Caco-2 (cell line): ENCODE measurements at regions of chr22 and their contacts with region 1.

Region 1: GRCh38 chr22:37538590-37539357 is 19.6 kb upstream of the CARD10 start:
- DNase-seq: peak; percentile 92 to 94
- H3K4me3 ChIP-seq: no peak overlapping the region
- H3K4me3 Mint-ChIP-seq: peak overlapping the region; percentile 50
- H3K27ac Mint-ChIP-seq: peak overlapping the region; percentile 66
- H3K4me1 ChIP-seq: peaks cover 12% of the 10 kb centered on the region
- H3K4me1 Mint-ChIP-seq: peaks cover 18% of the 10 kb centered on the region
- H3K27me3 ChIP-seq: no peaks in the 10 kb centered on the region
- H3K27me3 Mint-ChIP-seq: no peaks in the 10 kb centered on the region
- CTCF ChIP-seq: peak; percentile 93 to 96

Region 2: GRCh38 chr22:37457093-37457893 is 81.5 kb before region 1 on chr22:
- CTCF ChIA-PET with region 1: no interaction called
- POLR2A ChIA-PET with region 1: no interaction called
- intact Hi-C with region 1: no loop called
- DNase-seq: peak; percentile 84 to 92
- H3K4me3 ChIP-seq: no peak overlapping the region
- H3K4me3 Mint-ChIP-seq: no peak overlapping the region
- H3K27ac Mint-ChIP-seq: peak overlapping the region; percentile 94
- H3K4me1 ChIP-seq: peaks cover 35% of the 10 kb centered on the region
- H3K4me1 Mint-ChIP-seq: peaks cover 40% of the 10 kb centered on the region
- H3K27me3 ChIP-seq: no peaks in the 10 kb centered on the region
- H3K27me3 Mint-ChIP-seq: no peaks in the 10 kb centered on the region
- CTCF ChIP-seq: peak; percentile 92 to 98

Region 3: GRCh38 chr22:37566903-37567820 is 28.4 kb after region 1 on chr22:
- CTCF ChIA-PET with region 1: interaction called, 48 read pairs
- POLR2A ChIA-PET with region 1: interaction called, 7 read pairs
- intact Hi-C with region 1: loop called (anchors 1 kb)
- DNase-seq: peak; percentile 79 to 90
- H3K4me3 ChIP-seq: no peak overlapping the region
- H3K4me3 Mint-ChIP-seq: peak overlapping the region; percentile 16
- H3K27ac Mint-ChIP-seq: peak overlapping the region; percentile 48
- H3K4me1 ChIP-seq: peaks cover 80% of the 10 kb centered on the region
- H3K4me1 Mint-ChIP-seq: peaks cover 33% of the 10 kb centered on the region
- H3K27me3 ChIP-seq: no peaks in the 10 kb centered on the region
- H3K27me3 Mint-ChIP-seq: no peaks in the 10 kb centered on the region
- CTCF ChIP-seq: peak; percentile 90 to 93

Region 4: DNA sequence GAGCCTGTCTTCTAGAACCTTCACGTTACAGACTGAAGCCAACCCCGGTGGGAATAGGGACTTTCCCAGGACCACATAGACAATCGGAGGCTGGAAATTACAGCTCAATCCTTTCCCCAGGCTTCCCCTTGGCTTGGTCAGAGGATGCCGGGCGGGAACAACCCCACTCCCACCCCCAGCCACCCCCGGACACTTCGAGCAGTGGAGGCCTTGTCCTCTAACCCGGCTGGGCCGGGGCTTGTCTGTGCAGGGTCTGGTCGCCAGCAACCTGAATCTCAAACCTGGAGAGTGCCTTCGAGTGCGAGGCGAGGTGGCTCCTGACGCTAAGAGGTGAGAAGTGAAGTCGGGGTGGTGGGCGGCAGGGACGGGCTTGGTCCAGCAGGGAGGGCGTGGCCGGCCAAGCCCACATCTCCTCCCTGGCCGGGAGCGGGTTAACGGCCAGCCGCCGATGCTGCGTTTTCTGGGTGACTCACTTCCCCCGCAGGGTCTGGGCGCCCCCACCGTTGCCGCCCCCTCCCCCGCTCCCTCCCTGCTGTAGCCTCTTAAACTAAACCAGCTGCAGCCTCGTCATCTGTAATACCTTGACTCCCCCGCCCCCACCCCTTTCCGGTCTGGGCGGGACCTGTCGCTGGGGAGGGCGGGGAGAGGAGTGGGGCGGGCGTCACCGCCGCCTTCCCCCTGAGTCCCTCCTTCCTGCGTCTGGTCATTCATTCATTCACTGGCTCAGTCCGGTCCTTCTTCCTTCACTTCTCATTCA is 138.1 kb after region 1 on chr22:
- CTCF ChIA-PET with region 1: no interaction called
- POLR2A ChIA-PET with region 1: no interaction called
- intact Hi-C with region 1: loop called (anchors 5 kb)
- DNase-seq: peak; percentile 84 to 88
- H3K4me3 ChIP-seq: peak overlapping the region; percentile 53
- H3K4me3 Mint-ChIP-seq: peak overlapping the region; percentile 79
- H3K27ac Mint-ChIP-seq: peak overlapping the region; percentile 65
- H3K4me1 ChIP-seq: peaks cover 9% of the 10 kb centered on the region; the same call in 1 of the 2 replicates
- H3K4me1 Mint-ChIP-seq: peaks cover 7% of the 10 kb centered on the region
- H3K27me3 ChIP-seq: no peaks in the 10 kb centered on the region
- H3K27me3 Mint-ChIP-seq: no peaks in the 10 kb centered on the region
- CTCF ChIP-seq: no peak